GM23248 (cell line): ENCODE measurements at regions of chr1 and their contacts with region 1.

Region 1: GRCh38 chr1:7667625-7668218 is 103.4 kb upstream of the VAMP3 start:
- DNase-seq: peak; percentile 88
- H3K4me3 ChIP-seq: no peak overlapping the region
- H3K27ac ChIP-seq: no peak overlapping the region
- H3K4me1 ChIP-seq: no peaks in the 10 kb centered on the region
- H3K27me3 ChIP-seq: 0 out of 2 replicates have a peak, but pooled peaks cover 3% of the 10 kb centered on the region

Region 2: GRCh38 chr1:7745791-7746190 is 78.1 kb after region 1 on chr1:
- in situ Hi-C with region 1: loop called (anchors 5 kb)
- DNase-seq: no peak
- H3K4me3 ChIP-seq: no peak overlapping the region
- H3K27ac ChIP-seq: no peak overlapping the region
- H3K4me1 ChIP-seq: no peaks in the 10 kb centered on the region
- H3K27me3 ChIP-seq: no peaks in the 10 kb centered on the region; the same call in 1 of the 2 replicates

Region 3: GRCh38 chr1:7902478-7903085 is 234.9 kb after region 1 on chr1:
- in situ Hi-C with region 1: loop called (anchors 25 kb)
- DNase-seq: peak; percentile 80
- H3K4me3 ChIP-seq: peak overlapping the region; percentile 61
- H3K27ac ChIP-seq: no peak overlapping the region
- H3K4me1 ChIP-seq: no peaks in the 10 kb centered on the region; the same call in 1 of the 2 replicates
- H3K27me3 ChIP-seq: no peaks in the 10 kb centered on the region

Region 4: DNA sequence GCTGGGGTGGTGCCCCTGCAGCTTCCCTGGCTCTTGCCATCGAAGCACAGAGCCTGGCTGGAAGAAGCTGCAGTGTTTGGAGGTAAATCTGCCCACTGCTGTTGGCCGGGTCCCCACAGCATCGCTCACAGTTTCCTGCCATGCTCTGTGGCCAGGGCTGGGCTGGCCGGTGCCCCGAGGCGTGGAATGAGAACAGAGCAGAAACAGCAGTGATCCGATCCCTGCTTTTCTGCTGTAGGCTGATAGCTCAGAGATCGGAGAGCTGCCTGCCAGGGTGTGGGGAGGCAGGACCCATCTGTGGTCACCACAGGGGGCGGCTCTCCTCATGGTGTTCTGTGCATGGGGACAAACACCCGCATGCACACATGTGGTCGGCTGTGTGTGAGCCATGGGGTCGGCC is 661.7 kb after region 1 on chr1:
- in situ Hi-C with region 1: no loop called
- DNase-seq: peak; percentile 47
- H3K4me3 ChIP-seq: no peak overlapping the region
- H3K27ac ChIP-seq: no peak overlapping the region
- H3K4me1 ChIP-seq: no peaks in the 10 kb centered on the region
- H3K27me3 ChIP-seq: no peaks in the 10 kb centered on the region

Region 5: GRCh38 chr1:8970870-8971337 is 1303.2 kb after region 1 on chr1:
- in situ Hi-C with region 1: no loop called
- DNase-seq: no peak
- H3K4me3 ChIP-seq: no peak overlapping the region
- H3K27ac ChIP-seq: no peak overlapping the region
- H3K4me1 ChIP-seq: no peaks in the 10 kb centered on the region
- H3K27me3 ChIP-seq: no peaks in the 10 kb centered on the region